ENCODE measurements at regions of chr16 and their contacts with region 1.

Region 1: DNA sequence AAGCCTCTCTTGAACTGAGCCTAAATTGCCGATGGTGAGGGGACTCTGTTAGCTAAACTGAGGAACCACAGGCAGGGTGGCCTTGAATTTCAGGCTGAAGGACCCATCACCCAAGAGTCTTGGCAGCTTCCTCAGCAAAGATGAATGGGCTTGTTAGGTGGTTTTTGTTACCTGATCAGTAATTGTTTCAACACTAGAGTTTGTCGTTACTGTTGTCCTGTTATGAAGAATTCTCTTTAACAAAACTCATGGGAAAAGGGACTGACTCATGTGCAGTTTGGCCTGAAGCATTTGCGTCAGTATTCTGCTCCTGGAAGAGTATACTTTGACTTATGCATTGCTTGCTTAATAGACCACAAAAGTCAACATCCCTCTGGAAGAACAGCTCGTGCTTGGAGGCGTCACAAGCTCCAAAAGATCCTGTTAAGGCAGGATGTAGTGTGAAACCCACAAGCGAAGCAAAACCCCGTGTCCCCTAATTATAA is 206.0 kb downstream of the IRX3 start:
- DNase-seq: peak; percentile 94
- ATAC-seq: peak; percentile 92
- H3K4me3 ChIP-seq: no peak overlapping the region
- H3K27ac ChIP-seq: peak overlapping the region; percentile 98
- H3K4me1 ChIP-seq: peaks cover 35% of the 10 kb centered on the region
- H3K27me3 ChIP-seq: no peaks in the 10 kb centered on the region
- CTCF ChIP-seq: no peak

Region 2: DNA sequence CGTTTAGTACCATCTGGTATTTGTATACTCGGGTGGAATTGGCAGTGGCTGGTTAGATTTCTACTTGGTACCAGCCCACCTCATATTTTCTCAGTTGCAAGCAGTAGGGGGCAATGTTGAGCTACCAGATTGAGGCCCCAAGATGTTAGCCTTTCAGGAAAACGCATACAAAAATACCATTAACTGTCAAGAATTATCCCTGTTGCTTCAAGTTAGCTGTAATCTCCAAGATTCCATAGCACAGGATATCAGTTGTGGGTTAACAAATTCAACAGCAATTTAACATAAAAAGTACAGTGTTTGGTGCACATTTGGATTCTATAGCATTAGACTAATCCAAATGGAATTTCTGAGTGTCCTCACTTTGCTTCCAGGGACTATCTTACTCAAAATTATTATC is 188.4 kb before region 1 on chr16:
- CTCF ChIA-PET with region 1: no interaction called
- POLR2A ChIA-PET with region 1: no interaction called
- intact Hi-C with region 1: loop called (anchors 10 kb)
- DNase-seq: peak; percentile 50
- ATAC-seq: peak; percentile 44
- H3K4me3 ChIP-seq: no peak overlapping the region
- H3K27ac ChIP-seq: no peak overlapping the region
- H3K4me1 ChIP-seq: peaks cover 23% of the 10 kb centered on the region
- H3K27me3 ChIP-seq: no peaks in the 10 kb centered on the region
- CTCF ChIP-seq: peak; percentile 77

Measured in PC-3 (cell line).